ENCODE measurements at regions of chr3 and their contacts with region 1.

Region 1: DNA sequence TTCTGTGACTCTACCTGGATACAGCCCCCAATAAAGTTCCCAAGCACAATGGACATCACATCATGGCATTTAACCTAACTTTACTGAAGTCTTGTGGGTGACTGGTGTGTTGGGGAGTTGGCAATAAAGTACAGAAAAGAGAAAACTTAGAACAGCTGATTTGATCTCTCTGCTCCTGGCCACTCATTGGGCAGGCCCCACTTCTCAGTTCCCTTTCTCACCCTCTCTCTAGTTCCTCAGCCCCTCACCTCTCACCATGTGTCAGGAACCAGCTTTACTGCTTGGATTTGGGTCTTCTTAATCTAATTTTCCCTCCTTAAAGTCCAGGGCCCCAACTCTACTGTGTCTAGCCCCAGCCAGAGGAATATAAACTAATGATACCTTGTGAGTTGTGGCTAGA is 713 bp upstream of the MUC13 start:
- DNase-seq: no peak
- ATAC-seq: no peak
- H3K4me3 ChIP-seq: no peak overlapping the region
- H3K27ac ChIP-seq: peak overlapping the region in 1 of 4 donors; percentile 7
- H3K4me1 ChIP-seq: no peaks in the 10 kb centered on the region
- H3K27me3 ChIP-seq: no peaks in the 10 kb centered on the region
- CTCF ChIP-seq: no peak

Region 2: DNA sequence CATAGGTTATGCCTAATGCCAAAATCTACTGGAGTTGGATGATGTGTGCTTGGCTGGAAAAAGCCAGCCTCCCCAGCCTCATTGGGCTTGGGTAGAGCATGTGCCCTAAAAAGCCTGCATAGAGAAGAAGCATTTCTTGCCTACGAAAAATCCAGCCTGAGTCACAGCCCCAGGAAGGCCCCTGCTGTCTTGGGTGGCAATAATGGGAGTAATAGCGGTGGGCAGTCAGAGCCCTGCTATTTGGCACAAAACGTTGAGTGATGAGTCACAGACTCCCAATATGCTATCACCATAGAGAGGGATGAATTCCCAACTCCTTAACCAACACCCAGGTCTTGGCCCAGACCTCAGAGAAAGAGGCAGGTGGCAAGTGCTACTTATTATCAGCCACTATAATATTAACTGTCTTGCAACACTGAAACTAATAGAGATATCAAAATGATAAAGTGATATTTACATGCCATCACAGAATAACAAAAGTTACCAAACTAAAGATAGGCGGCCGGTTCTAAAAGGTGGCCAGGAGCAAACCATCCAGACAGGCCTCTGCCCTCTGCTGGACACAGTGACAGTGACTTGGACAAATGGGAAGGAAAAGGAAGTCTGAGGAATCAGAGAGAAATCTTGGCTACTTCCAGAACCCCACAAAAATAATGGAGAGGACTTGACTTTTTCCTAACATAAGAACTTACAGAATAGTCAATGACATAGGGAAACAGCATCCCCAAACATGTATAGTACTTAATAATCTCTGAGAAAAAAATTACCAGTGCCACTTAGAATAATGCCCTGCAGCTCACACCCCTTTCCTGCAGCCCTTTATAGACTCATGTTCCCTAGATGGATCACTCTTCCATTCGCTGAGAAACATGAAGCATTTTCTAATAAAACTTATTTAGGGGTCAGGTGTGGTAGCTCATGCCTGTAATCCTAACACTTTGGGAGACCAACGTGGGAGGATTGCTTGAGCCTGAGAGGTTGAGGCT is 51.2 kb after region 1 on chr3:
- intact Hi-C with region 1: loop called in 1 of 3 experiments (anchors 10 kb)
- DNase-seq: no peak
- ATAC-seq: peak in 3 of 4 donors; percentile 76 to 77 (median 77)
- H3K4me3 ChIP-seq: no peak overlapping the region
- H3K27ac ChIP-seq: no peak overlapping the region
- H3K4me1 ChIP-seq: no peaks in the 10 kb centered on the region
- H3K27me3 ChIP-seq: no peaks in the 10 kb centered on the region
- CTCF ChIP-seq: peak in 2 of 4 donors; percentile 21 to 36

Region 3: DNA sequence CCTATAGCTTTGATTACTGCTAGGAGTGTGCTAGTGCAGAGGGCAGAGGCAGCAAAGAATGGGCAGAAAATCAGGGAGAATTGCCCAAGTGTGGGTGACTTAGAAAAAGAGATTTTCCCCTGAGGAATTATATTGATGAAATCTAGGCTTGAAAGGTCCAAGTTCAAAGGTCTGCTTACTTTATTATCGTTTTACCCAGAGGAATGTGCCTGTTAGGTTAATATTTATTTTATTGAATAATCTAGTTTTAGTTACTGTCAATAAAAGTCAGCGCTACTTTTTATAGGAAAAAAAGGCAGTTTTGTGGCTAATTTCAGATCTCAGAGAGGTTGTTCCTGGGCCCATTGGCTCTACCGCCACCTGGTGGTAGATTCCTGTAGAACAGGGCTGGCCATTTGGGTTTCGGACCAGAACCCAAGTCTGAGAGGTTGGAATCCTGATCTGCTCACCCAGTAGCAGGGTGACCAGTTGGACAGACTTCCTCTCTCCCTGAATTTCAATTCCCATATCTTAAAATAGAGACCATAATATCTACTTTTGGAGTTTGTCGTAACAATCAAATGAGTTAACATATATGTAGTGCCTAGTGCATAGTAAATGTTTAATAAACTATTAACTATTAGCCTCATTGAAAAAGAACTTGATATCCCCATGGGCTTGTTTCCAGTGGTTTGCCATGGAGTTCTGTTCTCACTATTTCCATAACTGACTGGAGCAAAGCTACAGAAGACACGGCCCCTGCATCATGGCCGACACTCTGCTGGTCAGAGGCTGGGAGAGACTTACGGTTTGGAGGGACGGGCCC is 502.6 kb after region 1 on chr3:
- intact Hi-C with region 1: loop called in 1 of 3 experiments (anchors 10 kb)
- DNase-seq: peak in 5 of 6 donors; percentile 26 to 80 (median 61)
- ATAC-seq: peak; percentile 44 to 74 (median 72)
- H3K4me3 ChIP-seq: no peak overlapping the region
- H3K27ac ChIP-seq: no peak overlapping the region
- H3K4me1 ChIP-seq: peaks cover 6 to 15% (median 9%) of the 10 kb centered on the region in 3 donors
- H3K27me3 ChIP-seq: no peaks in the 10 kb centered on the region
- CTCF ChIP-seq: peak; percentile 83 to 94 (median 88)

Measured in pancreas (tissue), 10 donors.